Panc1 (cell line): ENCODE measurements at regions of chr17 and their contacts with region 1.

Region 1: GRCh38 chr17:7280519-7281429 is 744 bp upstream of the SLC2A4 start:
- DNase-seq: peak; percentile 80
- ATAC-seq: peak; percentile 87
- H3K4me3 ChIP-seq: peak overlapping the region; percentile 46 to 64
- H3K27ac ChIP-seq: peak overlapping the region; percentile 63; the same call in 1 of the 2 replicates
- H3K4me1 ChIP-seq: no peaks in the 10 kb centered on the region
- H3K27me3 ChIP-seq: no peaks in the 10 kb centered on the region
- CTCF ChIP-seq: peak; percentile 94

Region 2: GRCh38 chr17:7296189-7296902 is 15.6 kb after region 1 on chr17:
- CTCF ChIA-PET with region 1: interaction called, 4 read pairs
- POLR2A ChIA-PET with region 1: interaction called, 5 read pairs
- in situ Hi-C with region 1: no loop called
- intact Hi-C with region 1: loop called (anchors 2 kb)
- DNase-seq: no peak
- ATAC-seq: peak; percentile 79
- H3K4me3 ChIP-seq: peak overlapping the region; percentile 3 to 31; a peak in 2 of 4 replicates
- H3K27ac ChIP-seq: peak overlapping the region; percentile 57; the same call in 1 of the 2 replicates
- H3K4me1 ChIP-seq: peaks cover 17% of the 10 kb centered on the region
- H3K27me3 ChIP-seq: no peaks in the 10 kb centered on the region
- CTCF ChIP-seq: peak; percentile 96

Region 3: DNA sequence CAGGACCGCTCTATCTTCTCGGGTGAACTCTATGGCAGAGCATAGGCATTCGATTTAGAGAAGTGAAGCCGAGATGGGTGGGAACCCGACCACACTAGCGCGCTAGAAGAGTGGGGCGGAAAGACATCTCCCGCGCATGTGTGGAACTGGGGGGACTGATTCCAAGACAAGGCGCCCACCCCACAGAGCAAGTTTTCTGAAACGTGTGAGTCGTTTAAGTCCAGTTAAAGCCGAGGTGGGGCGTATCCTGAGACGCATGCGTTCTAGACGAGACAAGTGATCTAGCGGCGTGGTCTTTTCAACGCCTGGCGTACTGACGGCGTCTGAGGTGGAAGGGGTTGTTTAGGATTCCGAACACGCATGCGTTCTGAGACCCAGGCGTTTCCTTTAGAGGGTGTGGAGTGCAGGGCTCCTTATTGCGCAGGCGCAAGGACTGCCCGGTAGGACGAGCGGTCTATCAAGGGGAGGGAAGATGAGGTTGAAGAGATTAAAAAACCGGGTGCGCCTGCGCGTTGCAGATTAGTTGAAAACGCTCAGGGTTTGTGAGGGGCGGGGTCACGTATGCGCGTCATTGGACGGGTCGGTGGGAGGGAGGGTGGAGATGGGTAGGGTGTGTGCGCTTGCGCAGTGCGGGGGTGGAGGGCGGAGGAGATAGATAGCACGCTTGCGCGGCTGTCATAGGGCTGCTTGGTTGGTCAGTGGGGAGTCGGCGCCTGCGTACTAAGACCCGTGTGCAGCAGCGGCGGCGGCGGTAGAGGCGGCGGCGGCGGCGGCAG is 26.3 kb after region 1 on chr17 and contains the start of gene EIF5A:
- CTCF ChIA-PET with region 1: no interaction called
- POLR2A ChIA-PET with region 1: interaction called, 10 read pairs
- in situ Hi-C with region 1: no loop called
- intact Hi-C with region 1: no loop called
- DNase-seq: peak; percentile 100
- ATAC-seq: peak; percentile 89
- H3K4me3 ChIP-seq: peak within 1 kb of the TSS; percentile 86 to 92
- H3K27ac ChIP-seq: peak within 1 kb of the TSS; percentile 93
- H3K4me1 ChIP-seq: peaks cover 26% of the 10 kb centered on the region
- H3K27me3 ChIP-seq: no peaks in the 10 kb centered on the region
- CTCF ChIP-seq: no peak
- total RNA-seq, gene EIF5A: 728 TPM

Region 4: DNA sequence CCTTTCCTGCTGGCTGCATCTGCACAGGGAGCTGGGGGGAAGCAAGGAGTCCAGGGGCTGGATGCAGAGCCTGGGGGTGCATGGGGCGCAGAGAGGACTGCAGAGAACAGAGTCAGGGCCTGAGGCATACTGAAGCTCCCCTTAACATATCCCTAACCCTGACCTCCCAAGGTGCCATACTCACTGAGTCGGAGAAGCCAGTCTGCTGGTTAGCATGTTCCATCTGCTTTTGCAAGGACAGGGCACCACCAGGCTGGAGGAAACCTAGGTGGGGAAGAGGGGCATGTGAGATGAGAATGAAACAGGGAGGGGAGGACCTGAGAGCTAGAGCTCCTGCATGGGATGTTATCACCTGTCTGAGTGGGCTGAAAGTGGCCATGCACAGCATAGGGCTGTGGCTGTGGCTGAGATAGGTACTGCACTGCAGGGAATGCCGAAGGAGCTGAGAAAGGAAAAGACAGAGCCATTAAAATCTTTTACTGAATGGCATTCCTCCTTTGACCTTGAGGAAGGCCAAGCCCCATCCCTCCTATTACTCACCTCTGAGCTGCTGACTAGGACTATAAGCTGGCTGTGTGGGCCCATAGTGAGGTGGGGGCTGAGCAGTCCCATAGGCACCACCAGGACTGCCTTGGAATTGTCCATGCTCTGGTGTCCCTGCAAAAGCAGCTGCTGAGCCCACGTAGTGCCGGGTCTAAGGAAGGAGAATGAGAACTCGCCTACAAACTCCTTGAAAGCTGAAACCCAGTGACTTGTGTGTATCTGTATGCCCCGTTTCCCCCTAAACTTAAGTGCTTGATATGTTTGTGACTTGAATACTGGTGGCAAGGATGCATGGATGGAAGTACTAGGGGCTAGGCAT is 32.5 kb after region 1 on chr17:
- CTCF ChIA-PET with region 1: interaction called, 13 read pairs
- POLR2A ChIA-PET with region 1: interaction called, 3 read pairs
- in situ Hi-C with region 1: no loop called
- intact Hi-C with region 1: no loop called
- DNase-seq: no peak
- ATAC-seq: peak; percentile 56
- H3K4me3 ChIP-seq: peak overlapping the region in 1 of 2 experiments; percentile 75; a peak in 1 of 4 replicates
- H3K27ac ChIP-seq: peak overlapping the region; percentile 88; the same call in 1 of the 2 replicates
- H3K4me1 ChIP-seq: peaks cover 42% of the 10 kb centered on the region
- H3K27me3 ChIP-seq: no peaks in the 10 kb centered on the region
- CTCF ChIP-seq: no peak

Region 5: GRCh38 chr17:7367083-7367482 is 86.3 kb after region 1 on chr17:
- CTCF ChIA-PET with region 1: interaction called, 11 read pairs
- POLR2A ChIA-PET with region 1: no interaction called
- in situ Hi-C with region 1: no loop called
- intact Hi-C with region 1: no loop called
- DNase-seq: no peak
- ATAC-seq: no peak
- H3K4me3 ChIP-seq: no peak overlapping the region
- H3K27ac ChIP-seq: no peak overlapping the region
- H3K4me1 ChIP-seq: no peaks in the 10 kb centered on the region
- H3K27me3 ChIP-seq: no peaks in the 10 kb centered on the region
- CTCF ChIP-seq: no peak